Ovary (tissue), 10 donors: ENCODE measurements at regions of chr1 and their contacts with region 1.

Region 1: GRCh38 chr1:175434283-175434860 is 241.8 kb upstream of the KIAA0040 start:
- DNase-seq: no peak
- H3K4me3 ChIP-seq: no peak overlapping the region
- H3K27ac ChIP-seq: no peak overlapping the region
- H3K4me1 ChIP-seq: no peaks in the 10 kb centered on the region
- H3K27me3 ChIP-seq: no peaks in the 10 kb centered on the region
- CTCF ChIP-seq: no peak
- EP300 ChIP-seq: no peak
- POLR2A ChIP-seq: no peak

Region 2: DNA sequence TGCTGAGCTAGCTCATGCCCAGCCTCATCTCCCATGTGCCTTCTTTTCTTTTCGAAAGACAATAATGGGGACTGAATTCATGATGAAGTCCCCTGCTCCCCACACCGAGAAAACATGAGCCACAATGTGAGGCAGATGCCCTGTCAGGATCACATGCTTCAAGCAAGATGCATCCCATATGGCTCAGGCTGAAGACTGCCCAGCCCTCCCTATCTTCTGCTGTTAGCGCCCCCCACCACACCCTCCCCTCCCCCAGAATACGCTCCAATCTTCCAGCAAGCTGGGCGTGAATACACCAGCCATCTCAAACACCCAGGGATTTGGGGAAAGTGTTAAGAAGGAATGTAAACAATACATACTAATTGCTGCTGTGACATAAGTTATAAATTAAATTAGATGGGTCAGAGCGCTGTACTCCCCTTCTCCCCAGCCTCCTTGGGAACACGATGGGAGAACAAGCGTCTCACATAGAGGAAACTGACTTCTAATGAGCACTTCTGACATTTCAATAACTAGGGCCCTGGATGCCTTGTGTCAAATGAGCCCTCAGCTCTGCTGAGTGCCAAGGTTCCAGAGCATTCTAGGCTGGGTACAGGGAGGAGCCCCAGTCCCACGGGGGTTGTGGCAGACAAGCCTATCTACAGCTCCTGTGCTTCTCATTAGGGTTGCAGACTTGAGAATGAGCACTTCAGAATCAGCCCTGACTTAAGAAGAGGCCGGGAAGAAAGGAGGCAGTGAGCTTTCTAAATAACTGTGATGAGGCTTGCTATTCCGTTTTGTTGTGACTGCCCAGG is 253.4 kb after region 1 on chr1:
- intact Hi-C with region 1: loop called in 1 of 4 experiments (anchors 5 kb)
- DNase-seq: no peak
- H3K4me3 ChIP-seq: no peak overlapping the region
- H3K27ac ChIP-seq: no peak overlapping the region
- H3K4me1 ChIP-seq: no peaks in the 10 kb centered on the region
- H3K27me3 ChIP-seq: no peaks in the 10 kb centered on the region
- CTCF ChIP-seq: no peak
- EP300 ChIP-seq: no peak
- POLR2A ChIP-seq: no peak